MCF 10A (cell line): ENCODE measurements at regions of chr9 and their contacts with region 1.

Region 1: GRCh38 chr9:136363606-136364370 is at the start of gene DNLZ:
- DNase-seq: peak; percentile 81
- H3K4me3 Mint-ChIP-seq: peak within 1 kb of the TSS; percentile 74
- H3K27ac Mint-ChIP-seq: peak within 1 kb of the TSS; percentile 51
- H3K4me1 Mint-ChIP-seq: no peaks in the 10 kb centered on the region
- H3K27me3 Mint-ChIP-seq: no peaks in the 10 kb centered on the region
- CTCF ChIP-seq: peak; percentile 90
- total RNA-seq, gene DNLZ: 24.5 and 30.5 TPM in 2 replicates

Region 2: DNA sequence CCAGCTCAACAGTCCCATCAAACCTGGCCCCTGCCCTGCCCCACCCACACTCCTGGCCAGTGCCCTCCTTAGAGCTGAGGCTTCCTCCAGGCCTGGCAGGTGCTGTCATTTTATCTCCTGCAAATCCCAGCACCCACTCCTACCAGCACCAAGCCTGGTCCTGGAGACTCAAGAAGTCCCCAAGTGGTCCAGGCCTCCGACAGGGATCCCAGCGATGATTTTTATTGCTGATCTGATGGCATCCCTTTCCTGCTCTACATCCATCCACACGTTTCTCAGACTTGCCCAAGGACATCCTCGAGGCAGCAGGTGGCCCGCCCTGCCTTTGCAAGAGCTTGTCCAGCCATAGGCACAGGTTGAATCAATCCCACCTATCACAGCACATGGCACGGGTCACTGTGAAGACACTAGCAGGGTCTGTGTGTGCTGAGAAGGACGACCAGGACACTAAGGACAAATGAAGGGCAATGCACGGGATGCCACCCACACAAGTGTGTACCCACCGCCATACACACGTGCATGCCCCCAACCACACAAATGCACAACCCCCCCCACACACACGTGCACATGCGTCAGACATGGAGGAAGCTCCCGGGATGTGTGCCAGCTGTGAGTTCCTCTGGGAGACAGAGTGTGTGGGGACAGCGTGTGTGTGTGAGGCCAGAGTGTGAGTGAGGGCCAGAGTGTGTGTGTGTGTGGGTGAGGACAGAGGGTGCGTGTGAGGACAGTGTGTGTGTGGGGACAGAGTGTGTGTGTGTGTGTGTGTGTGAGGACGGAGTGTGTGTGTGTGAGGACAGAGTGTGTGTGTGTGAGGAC is 340.2 kb before region 1 on chr9:
- CTCF ChIA-PET with region 1: no interaction called
- POLR2A ChIA-PET with region 1: no interaction called
- intact Hi-C with region 1: no loop called
- DNase-seq: no peak
- H3K4me3 Mint-ChIP-seq: no peak overlapping the region
- H3K27ac Mint-ChIP-seq: no peak overlapping the region
- H3K4me1 Mint-ChIP-seq: no peaks in the 10 kb centered on the region
- H3K27me3 Mint-ChIP-seq: no peaks in the 10 kb centered on the region
- CTCF ChIP-seq: no peak

Region 3: GRCh38 chr9:136339173-136339957 is 24.4 kb before region 1 on chr9:
- CTCF ChIA-PET with region 1: interaction called, 4 read pairs
- POLR2A ChIA-PET with region 1: interaction called, 4 read pairs
- intact Hi-C with region 1: loop called (anchors 1 kb)
- DNase-seq: peak; percentile 73
- H3K4me3 Mint-ChIP-seq: no peak overlapping the region
- H3K27ac Mint-ChIP-seq: no peak overlapping the region
- H3K4me1 Mint-ChIP-seq: no peaks in the 10 kb centered on the region
- H3K27me3 Mint-ChIP-seq: no peaks in the 10 kb centered on the region
- CTCF ChIP-seq: peak; percentile 93

Region 4: GRCh38 chr9:136345281-136346156 is 18.3 kb before region 1 on chr9:
- CTCF ChIA-PET with region 1: interaction called, 6 read pairs
- POLR2A ChIA-PET with region 1: interaction called, 10 read pairs
- intact Hi-C with region 1: no loop called
- DNase-seq: peak; percentile 53
- H3K4me3 Mint-ChIP-seq: no peak overlapping the region
- H3K27ac Mint-ChIP-seq: no peak overlapping the region
- H3K4me1 Mint-ChIP-seq: no peaks in the 10 kb centered on the region
- H3K27me3 Mint-ChIP-seq: no peaks in the 10 kb centered on the region
- CTCF ChIP-seq: peak; percentile 21